ENCODE measurements at regions of chr1 and their contacts with region 1.

Region 1: DNA sequence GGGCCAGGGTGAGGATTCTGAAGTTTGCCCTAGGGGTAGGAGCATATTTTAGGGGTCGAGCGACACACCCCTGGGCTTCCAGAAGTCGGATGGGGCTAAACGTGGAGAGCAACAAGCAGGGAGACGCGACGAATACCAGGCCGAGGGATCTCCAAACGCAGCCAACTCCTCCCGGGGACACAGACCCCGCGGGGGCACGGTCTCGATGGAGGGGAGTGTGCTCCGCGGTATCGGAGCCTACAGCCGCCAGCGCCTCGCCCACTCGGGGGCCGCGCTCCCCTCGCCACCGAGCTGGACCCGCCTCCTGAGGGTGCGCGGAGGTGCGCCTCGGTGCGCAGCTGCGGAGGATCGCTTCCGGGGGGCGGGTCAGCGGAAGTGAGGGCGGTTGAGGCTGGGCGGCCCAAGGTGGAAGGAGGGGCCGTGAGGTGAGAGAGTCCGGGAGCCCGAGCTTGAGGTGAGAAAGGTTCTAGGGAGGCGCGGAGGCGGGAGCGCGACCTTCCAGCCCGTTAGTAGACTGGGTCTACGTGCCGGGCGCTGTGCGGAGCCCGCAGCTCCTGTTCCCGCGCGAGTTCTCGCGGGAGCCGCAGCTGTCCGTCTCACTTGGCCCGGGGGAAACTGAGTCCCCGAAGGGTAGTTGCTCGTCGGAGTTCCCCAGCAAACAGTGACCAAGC is at the start of gene MTFR1L:
- DNase-seq: peak; percentile 86 to 98 (median 88)

Region 2: DNA sequence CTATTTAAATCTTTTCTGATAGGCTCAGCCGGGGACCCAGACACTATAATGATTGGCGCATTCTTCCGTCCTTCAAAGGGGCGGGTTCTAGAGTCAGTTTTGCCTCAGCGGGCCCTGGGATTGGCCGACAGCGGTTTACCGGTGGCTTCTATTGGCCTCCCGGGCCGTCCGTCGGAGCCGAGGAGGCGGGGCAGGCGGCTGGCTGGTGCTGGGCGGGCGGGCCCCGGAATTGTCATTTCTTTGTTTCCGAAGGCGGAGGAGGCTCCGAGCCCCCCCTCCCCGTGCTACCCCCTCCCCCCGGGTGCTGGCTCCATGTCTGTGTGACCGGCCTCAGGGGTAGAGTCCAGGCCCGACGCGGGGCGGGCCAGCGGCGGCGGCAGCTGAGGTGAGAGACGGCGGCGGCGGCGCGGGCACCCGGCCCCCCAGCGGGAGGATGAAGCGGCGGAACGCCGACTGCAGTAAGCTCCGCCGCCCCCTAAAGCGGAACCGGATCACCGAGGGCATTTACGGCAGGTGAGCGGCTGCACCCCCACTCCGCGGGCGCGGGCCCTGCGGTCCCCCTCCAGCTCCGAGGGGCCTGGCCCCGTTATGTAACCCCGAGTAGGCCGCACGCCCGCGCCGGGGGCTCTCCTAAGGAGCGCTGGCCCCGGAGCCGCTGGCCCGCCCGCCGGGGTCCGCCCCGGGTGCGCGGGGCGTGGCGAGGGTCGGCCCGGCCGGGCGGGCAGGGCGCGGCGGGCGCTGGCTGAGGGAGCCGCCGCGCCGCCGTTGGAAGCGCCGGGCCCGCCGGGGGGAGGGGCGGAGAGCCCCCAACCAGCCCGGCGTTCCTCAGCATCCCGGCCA is 388.8 kb before region 1 on chr1 and contains the start of gene MACO1:
- intact Hi-C with region 1: loop called (anchors 10 kb)
- DNase-seq: peak; percentile 98 to 100 (median 99)

Region 3: DNA sequence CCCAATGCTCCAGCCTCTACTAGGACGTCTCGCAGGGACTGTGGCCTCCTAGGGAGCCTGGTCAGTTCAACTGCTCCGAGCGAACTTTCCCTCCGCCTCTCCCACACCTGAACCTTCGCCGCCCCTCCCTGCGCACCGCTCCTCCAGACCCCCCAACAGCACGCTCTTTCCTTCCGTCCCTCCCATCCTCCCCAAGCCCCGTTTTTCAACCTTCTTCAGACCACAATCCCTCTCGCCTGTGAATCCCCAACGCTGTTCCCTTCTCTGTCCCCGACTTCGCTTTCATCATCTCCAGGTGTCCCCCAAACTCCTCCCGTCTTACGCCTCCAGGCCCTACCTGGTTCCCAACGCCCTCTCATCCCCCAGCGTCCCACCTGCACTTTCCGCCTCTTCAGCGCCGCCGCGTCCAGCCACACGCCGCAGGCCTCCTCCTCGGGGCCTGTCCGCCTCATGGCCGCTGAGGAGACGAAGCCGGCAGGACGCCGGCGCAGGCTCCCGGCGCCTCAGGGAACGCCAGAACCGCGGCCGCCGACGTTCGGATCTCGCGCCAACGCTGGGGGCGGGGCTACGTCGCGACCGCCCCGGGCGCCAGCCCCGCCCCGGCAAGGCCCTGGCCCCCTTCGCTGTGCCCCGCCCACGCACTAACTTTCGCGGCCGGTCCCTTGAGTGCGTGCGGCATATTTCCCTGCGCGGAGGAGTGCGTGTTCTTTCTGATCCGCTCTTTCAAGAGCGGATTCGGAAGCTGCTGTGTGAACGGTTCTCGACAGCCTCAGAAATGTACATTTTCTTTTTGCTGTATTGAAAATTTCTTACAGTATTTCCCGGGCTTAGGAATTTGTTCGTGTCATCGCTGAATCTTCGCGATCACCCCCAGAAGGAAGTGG is 39.4 kb after region 1 on chr1 and contains the start of gene AUNIP:
- intact Hi-C with region 1: no loop called
- DNase-seq: peak; percentile 58 to 97 (median 77)